ENCODE measurements at regions of chr1 and their contacts with region 1.

Region 1: GRCh38 chr1:83931658-83932253 is 67.2 kb downstream of the TTLL7 start:
- DNase-seq: peak; percentile 58

Region 2: GRCh38 chr1:84122780-84123382 is 191.1 kb after region 1 on chr1:
- in situ Hi-C with region 1: loop called (anchors 25 kb)
- DNase-seq: peak; percentile 45

Region 3: GRCh38 chr1:84433258-84434080 is 501.7 kb after region 1 on chr1:
- in situ Hi-C with region 1: loop called (anchors 25 kb)
- DNase-seq: peak; percentile 85